ENCODE measurements at regions of chr12 and their contacts with region 1.

Region 1: GRCh38 chr12:7188562-7189397 is 706 bp upstream of the PEX5 start:
- DNase-seq: peak; percentile 81
- H3K4me3 ChIP-seq: peak overlapping the region; percentile 81
- H3K27ac ChIP-seq: peak overlapping the region; percentile 73
- H3K4me1 ChIP-seq: no peaks in the 10 kb centered on the region
- H3K27me3 ChIP-seq: no peaks in the 10 kb centered on the region
- CTCF ChIP-seq: peak; percentile 87

Region 2: DNA sequence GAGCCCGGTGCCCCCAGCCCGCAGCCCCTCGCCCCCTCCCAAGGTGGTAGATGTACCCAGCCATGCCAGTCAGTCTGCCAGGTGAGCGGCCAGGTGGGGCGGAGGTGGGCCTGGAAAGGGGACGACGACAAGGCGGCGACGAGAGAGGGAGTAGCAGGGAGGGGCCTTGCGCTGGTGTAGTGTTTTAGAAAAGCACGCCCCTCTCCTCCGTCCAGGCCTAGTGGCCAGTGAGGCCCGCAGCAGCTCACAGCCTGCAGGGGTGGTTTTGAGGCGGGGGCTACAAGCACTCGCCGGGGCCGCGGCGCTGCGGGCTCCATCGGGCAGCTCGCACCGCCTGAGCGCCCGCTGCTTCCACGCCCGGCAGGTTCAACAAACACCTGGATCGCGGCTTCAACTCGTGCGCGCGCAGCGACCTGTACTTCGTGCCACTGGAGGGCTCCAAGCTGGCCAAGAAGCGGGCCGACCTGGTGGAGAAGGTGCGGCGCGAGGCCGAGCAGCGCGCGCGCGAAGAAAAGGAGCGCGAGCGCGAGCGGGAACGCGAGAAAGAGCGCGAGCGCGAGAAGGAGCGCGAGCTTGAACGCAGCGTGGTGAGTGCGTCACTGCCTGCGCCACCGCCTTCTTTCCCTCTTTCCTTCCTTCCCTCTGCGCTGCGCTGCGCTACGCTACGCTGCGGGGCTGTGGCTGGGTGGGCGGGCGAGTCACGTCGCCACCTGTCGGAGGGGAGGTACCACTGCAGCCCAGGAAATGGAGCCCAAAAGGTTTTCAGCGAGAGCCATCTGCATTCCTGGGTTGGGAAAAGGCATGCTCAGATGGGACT is 251.1 kb before region 1 on chr12:
- CTCF ChIA-PET with region 1: no interaction called
- POLR2A ChIA-PET with region 1: interaction called, 27 read pairs
- intact Hi-C with region 1: no loop called
- DNase-seq: peak; percentile 98
- H3K4me3 ChIP-seq: peak overlapping the region; percentile 62
- H3K27ac ChIP-seq: peak overlapping the region; percentile 98
- H3K4me1 ChIP-seq: peaks cover 16% of the 10 kb centered on the region
- H3K27me3 ChIP-seq: no peaks in the 10 kb centered on the region
- CTCF ChIP-seq: peak; percentile 99

Region 3: DNA sequence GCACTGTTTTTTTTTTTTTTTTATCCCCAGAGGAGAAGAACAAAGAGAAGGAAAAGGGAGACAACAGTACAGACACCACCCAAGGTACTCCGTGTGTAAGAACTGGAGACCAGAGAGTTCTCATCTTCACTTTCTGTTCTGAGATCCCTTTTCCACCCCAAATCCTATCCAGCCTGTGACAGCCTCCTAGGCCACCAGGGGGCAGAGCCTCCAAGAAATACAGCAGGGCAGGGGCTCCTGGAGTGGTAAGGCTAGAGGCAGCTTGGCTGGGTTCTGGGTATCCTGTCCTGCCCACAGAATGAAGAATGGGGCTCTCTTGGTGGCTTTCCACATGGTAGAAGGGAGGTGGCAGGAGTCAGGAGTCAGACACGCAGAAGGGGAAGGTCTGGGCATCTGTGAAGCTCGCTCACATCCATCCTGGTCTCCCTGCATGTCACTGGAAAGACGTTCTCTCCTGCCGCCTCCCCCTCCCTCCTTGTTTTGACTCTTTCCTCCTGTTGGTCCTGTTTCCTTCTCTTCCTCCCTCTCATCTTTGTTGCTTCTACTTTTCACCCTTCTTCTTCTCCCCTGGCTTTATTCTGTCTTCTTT is 46.6 kb before region 1 on chr12:
- CTCF ChIA-PET with region 1: interaction called, 3 read pairs
- POLR2A ChIA-PET with region 1: no interaction called
- intact Hi-C with region 1: loop called (anchors 1 kb)
- DNase-seq: peak; percentile 80
- H3K4me3 ChIP-seq: no peak overlapping the region
- H3K27ac ChIP-seq: no peak overlapping the region
- H3K4me1 ChIP-seq: no peaks in the 10 kb centered on the region
- H3K27me3 ChIP-seq: no peaks in the 10 kb centered on the region
- CTCF ChIP-seq: peak; percentile 85

Region 4: GRCh38 chr12:7344833-7345606 is 156.2 kb after region 1 on chr12:
- CTCF ChIA-PET with region 1: no interaction called
- POLR2A ChIA-PET with region 1: no interaction called
- intact Hi-C with region 1: no loop called
- DNase-seq: no peak
- H3K4me3 ChIP-seq: no peak overlapping the region
- H3K27ac ChIP-seq: no peak overlapping the region
- H3K4me1 ChIP-seq: no peaks in the 10 kb centered on the region
- H3K27me3 ChIP-seq: no peaks in the 10 kb centered on the region
- CTCF ChIP-seq: no peak

Region 5: DNA sequence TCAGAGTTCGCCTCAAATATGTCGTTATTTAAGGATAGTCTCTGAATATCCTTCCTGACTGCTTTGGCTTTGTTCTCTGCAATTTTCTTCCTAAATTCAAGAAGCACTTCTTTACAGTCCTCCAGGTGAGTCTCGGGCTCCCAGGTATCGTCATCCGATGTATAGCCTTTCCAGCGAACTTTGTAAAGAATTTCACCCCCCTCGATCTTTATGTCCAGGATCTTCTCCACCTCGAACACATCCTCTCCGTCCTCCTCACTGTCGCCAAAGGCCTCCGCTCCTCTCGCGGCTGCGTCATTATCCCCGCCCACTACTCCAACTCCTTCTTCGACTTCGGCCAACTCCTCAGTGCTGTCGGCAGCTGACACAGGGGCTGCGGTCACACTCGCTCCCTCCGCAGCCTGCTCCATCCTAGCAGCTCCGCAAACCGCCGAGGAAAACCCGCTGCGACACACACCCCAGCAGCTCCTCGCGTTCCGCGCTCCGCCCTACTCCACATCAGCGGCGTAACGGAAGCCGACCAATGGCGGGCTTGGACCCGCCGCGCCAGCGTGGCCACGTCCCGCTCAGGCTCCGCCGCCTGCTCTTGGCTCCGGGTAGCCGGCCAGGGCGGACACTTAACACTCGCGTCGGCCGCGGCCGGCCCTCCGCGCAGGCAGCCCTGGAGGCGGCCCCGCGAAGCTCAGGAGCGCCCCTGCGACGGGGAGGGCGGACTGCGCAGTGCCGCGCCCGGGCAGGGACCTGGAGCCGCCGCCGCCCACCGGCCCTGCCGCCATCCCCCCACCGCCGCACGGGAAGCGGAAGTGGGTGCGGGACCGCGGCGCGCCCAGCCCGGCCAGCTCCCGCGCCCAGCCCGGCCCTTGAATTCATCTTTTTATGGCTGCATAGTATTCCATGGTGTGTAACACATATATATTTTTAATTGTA is 251.1 kb after region 1 on chr12:
- CTCF ChIA-PET with region 1: no interaction called
- POLR2A ChIA-PET with region 1: no interaction called
- intact Hi-C with region 1: no loop called
- DNase-seq: peak; percentile 87
- H3K4me3 ChIP-seq: peak overlapping the region; percentile 51
- H3K27ac ChIP-seq: peak overlapping the region; percentile 74
- H3K4me1 ChIP-seq: no peaks in the 10 kb centered on the region
- H3K27me3 ChIP-seq: no peaks in the 10 kb centered on the region
- CTCF ChIP-seq: no peak

Measured in A673 (cell line).